A549 (cell line): ENCODE measurements at regions of chr1 and their contacts with region 1.

Region 1: DNA sequence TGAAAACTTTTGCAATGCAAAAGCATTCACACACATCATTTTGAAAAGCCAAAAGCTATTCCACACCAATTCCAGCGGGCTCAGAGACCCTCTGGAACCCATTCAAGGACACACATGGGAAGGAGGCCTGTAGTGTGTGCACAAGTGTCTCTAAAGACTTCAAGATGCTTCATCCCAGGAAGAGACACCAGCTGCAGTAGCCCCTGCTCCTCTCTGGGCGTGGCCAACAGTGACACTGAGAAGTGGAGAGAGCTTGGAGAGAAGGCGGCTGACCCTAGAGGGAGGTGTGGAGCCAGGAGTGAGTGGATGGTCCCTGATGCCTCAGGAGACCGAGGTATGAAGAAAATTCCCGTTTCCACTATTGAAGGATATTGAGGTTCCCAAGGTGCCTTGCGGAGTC is 14.9 kb upstream of the TNNI1 start:
- DNase-seq: peak; percentile 62 to 68
- ATAC-seq: peak; percentile 99
- H3K4me3 ChIP-seq: no peak overlapping the region
- H3K27ac ChIP-seq: peak overlapping the region; percentile 21 to 58; a peak in 3 of 6 replicates
- H3K4me1 ChIP-seq: peaks cover 14% of the 10 kb centered on the region
- CTCF ChIP-seq: no peak
- EP300 ChIP-seq: no peak
- POLR2A ChIP-seq: no peak
- RAD21 ChIP-seq: peak; percentile 13 to 43; a peak in 2 of 5 replicates

Region 2: GRCh38 chr1:201447911-201448871 is 11.8 kb after region 1 on chr1:
- CTCF ChIA-PET with region 1: interaction called, 158 read pairs
- POLR2A ChIA-PET with region 1: interaction called, 5 read pairs
- DNase-seq: peak; percentile 84 to 94
- ATAC-seq: peak; percentile 95 to 99
- H3K4me3 ChIP-seq: no peak overlapping the region
- H3K27ac ChIP-seq: peak overlapping the region; percentile 53 to 87
- H3K4me1 ChIP-seq: peaks cover 29% of the 10 kb centered on the region
- CTCF ChIP-seq: peak; percentile 90
- EP300 ChIP-seq: no peak
- POLR2A ChIP-seq: no peak
- RAD21 ChIP-seq: peak; percentile 90 to 92

Region 3: DNA sequence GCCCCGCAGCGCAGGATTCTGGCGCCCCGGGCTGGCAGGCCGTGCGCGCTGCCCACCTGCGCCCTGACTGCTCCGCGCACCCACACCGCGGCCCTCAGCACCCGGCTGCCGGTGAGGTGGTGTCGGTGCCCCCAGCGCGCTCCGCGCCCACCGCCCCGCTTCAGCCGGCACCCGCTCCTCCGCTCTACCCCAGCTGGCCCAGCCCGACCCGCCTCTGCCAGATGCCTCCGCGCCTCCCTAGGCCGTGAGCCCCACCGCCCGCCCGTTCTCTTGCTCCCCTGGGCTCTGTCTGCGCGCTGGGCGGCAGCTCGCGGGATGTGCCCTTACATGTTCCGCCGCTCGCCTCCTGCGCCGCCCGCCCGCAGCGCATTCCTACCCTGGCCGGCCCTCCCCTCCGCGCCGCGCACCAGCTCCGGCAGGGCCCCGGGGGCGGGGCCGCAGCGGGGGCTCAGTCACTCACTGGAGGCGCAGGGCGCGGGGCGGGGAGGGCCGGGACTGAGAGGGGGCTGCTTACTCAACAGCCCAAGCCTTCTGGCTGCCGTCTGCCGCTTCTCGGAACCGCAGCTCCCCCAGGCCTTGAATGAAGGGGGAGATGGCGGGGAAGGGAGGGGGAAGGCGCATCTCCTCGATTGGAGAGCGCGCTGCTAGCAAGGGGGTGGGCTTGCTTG is 32.6 kb after region 1 on chr1 and contains the start of gene PHLDA3:
- CTCF ChIA-PET with region 1: interaction called, 318 read pairs
- POLR2A ChIA-PET with region 1: interaction called, 3 read pairs
- DNase-seq: peak; percentile 77 to 78
- ATAC-seq: peak; percentile 81 to 87
- H3K4me3 ChIP-seq: peak within 1 kb of the TSS; percentile 80
- H3K27ac ChIP-seq: peak within 1 kb of the TSS; percentile 93 to 99
- H3K4me1 ChIP-seq: peaks cover 50% of the 10 kb centered on the region
- CTCF ChIP-seq: peak; percentile 8; the same call in 1 of the 3 replicates
- EP300 ChIP-seq: no peak
- POLR2A ChIP-seq: peak; percentile 85
- RAD21 ChIP-seq: peak in 1 of 2 experiments; percentile 24; a peak in 2 of 5 replicates
- polyA plus RNA-seq, gene PHLDA3: 34.3 and 40.5 TPM in 2 replicates

Region 4: DNA sequence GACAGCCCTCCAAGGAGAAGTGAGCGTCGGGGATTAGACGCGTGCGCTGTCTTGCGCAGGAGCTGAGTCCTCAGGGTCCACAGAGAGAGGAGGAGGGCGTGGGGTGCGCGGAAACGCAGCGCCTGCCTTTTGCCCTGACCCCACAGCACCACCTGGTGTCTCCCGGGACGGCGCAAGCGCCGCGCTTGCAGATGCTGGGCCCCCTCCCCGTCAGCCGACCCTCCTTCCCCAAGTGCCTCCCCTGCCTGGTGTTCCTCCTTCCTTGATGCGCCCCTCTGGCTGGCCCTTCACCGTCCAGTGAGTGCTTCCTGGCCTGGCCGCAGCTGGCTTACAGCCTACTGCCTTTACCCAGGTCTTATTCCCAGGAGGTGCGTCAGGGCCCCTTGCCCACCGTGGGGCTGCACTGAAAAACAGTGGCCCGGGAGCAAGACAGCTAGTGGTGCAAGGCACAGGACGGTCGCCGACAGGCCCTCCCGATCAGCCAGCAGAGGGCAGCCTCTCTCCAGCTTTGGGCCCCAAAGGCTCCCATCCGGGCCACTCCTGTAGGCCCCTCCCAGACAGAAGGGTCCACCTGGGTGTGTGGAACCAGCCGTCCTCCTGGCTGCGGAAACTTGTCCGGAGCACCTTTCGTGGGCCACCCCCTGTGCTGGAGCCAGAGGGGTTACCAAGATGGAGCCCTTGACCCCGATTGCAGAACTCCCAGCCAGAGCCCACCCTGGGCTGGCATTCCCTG is 45.5 kb after region 1 on chr1:
- CTCF ChIA-PET with region 1: interaction called, 318 read pairs
- POLR2A ChIA-PET with region 1: no interaction called
- DNase-seq: peak; percentile 86 to 92
- ATAC-seq: peak; percentile 55 to 83
- H3K4me3 ChIP-seq: no peak overlapping the region
- H3K27ac ChIP-seq: peak overlapping the region; percentile 77 to 86
- H3K4me1 ChIP-seq: peaks cover 50% of the 10 kb centered on the region
- CTCF ChIP-seq: peak; percentile 93
- EP300 ChIP-seq: no peak
- POLR2A ChIP-seq: no peak
- RAD21 ChIP-seq: peak; percentile 97 to 98

Region 5: GRCh38 chr1:201593200-201593921 is 157.0 kb after region 1 on chr1:
- CTCF ChIA-PET with region 1: no interaction called
- POLR2A ChIA-PET with region 1: no interaction called
- DNase-seq: peak; percentile 28 to 75
- ATAC-seq: peak; percentile 66
- H3K4me3 ChIP-seq: no peak overlapping the region
- H3K27ac ChIP-seq: peak overlapping the region; percentile 81 to 90
- H3K4me1 ChIP-seq: peaks cover 62% of the 10 kb centered on the region
- CTCF ChIP-seq: no peak
- EP300 ChIP-seq: peak; percentile 94 to 95; a peak in 4 of 5 replicates
- POLR2A ChIP-seq: no peak
- RAD21 ChIP-seq: peak in 1 of 2 experiments; percentile 43; a peak in 2 of 5 replicates